CD14-positive monocyte (primary cell): ENCODE measurements at regions of chrX and their contacts with region 1.

Region 1: DNA sequence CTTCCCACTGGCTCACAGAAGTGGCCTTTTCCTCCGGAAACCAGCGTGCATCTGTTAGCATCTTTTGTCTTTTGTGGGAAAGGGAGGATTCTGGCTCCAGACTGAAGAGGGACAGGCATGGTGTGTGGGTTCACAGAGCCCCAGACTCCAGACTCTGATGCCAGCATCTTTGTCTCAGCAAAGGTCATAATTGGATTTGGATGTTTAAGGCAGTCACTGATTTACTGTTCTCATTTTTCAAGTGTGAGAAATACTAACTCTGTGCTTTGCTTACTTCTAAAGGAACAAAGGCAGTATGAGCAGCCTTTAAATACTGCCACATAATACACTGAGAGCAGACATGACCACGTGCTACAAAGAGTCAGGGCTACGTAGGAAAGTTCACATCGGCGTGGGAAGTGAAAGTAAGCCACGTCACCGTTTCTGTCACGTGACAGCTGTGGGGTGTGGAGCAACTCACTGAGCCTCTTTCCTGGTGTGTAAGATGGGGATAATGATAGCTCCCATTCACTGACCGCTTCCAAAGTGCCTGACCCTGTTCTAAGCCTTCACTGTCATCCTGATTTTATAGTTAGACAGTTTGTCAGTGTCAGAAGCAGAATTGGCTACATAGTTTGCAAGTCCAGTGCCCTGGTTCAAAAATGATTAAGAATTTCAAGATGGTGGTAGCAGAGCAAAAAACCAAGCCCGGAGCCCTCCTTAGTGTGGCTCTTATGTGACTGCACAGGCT is 24.8 kb upstream of the TMSB4X start:
- DNase-seq: peak; percentile 91 to 97 (median 96)
- H3K4me3 ChIP-seq: peak overlapping the region; percentile 13 to 44 (median 24)
- H3K4me3 Mint-ChIP-seq: peak overlapping the region; percentile 77 to 86
- H3K27ac ChIP-seq: peak overlapping the region; percentile 86 to 94
- H3K27ac Mint-ChIP-seq: peak overlapping the region; percentile 96 to 99 (median 98)
- H3K4me1 ChIP-seq: peaks cover 78 to 87% of the 10 kb centered on the region in 2 donors
- H3K4me1 Mint-ChIP-seq: peaks cover 75% of the 10 kb centered on the region
- H3K27me3 ChIP-seq: peaks cover 0 to 17% of the 10 kb centered on the region in 2 donors
- H3K27me3 Mint-ChIP-seq: peaks cover 0 to 42% (median 0%) of the 10 kb centered on the region in 3 donors
- CTCF ChIP-seq: no peak

Region 2: GRCh38 chrX:12984629-12985319 is 34.7 kb after region 1 on chrX:
- intact Hi-C with region 1: no loop called
- DNase-seq: peak in 1 of 3 donors; percentile 46
- H3K4me3 ChIP-seq: no peak overlapping the region
- H3K4me3 Mint-ChIP-seq: no peak overlapping the region
- H3K27ac ChIP-seq: no peak overlapping the region
- H3K27ac Mint-ChIP-seq: peak overlapping the region in 5 of 7 donors; percentile 9 to 79 (median 18)
- H3K4me1 ChIP-seq: peaks cover 37% of the 10 kb centered on the region in 2 donors
- H3K4me1 Mint-ChIP-seq: peaks cover 42% of the 10 kb centered on the region
- H3K27me3 ChIP-seq: peaks cover 0 to 36% of the 10 kb centered on the region in 2 donors
- H3K27me3 Mint-ChIP-seq: peaks cover 0 to 67% (median 1%) of the 10 kb centered on the region in 3 donors
- CTCF ChIP-seq: no peak

Region 3: GRCh38 chrX:13487731-13488523 is 537.8 kb after region 1 on chrX:
- intact Hi-C with region 1: loop called (anchors 5 to 10 kb)
- DNase-seq: peak; percentile 25 to 38 (median 34)
- H3K4me3 ChIP-seq: no peak overlapping the region
- H3K4me3 Mint-ChIP-seq: no peak overlapping the region
- H3K27ac ChIP-seq: peak overlapping the region in 1 of 2 donors; percentile 57
- H3K27ac Mint-ChIP-seq: peak overlapping the region; percentile 54 to 86 (median 63)
- H3K4me1 ChIP-seq: peaks cover 44 to 51% of the 10 kb centered on the region in 2 donors
- H3K4me1 Mint-ChIP-seq: peaks cover 36% of the 10 kb centered on the region
- H3K27me3 ChIP-seq: peaks cover 0 to 27% of the 10 kb centered on the region in 2 donors
- H3K27me3 Mint-ChIP-seq: peaks cover 0 to 34% (median 1%) of the 10 kb centered on the region in 3 donors
- CTCF ChIP-seq: peak; percentile 55